A673 (cell line): ENCODE measurements at regions of chr17 and their contacts with region 1.

Region 1: GRCh38 chr17:42833767-42834422 is 698 bp downstream of the PSME3 start:
- DNase-seq: peak; percentile 14
- H3K4me3 ChIP-seq: peak overlapping the region; percentile 79
- H3K27ac ChIP-seq: peak overlapping the region; percentile 95
- H3K4me1 ChIP-seq: peaks cover 9% of the 10 kb centered on the region
- H3K27me3 ChIP-seq: no peaks in the 10 kb centered on the region
- CTCF ChIP-seq: no peak

Region 2: GRCh38 chr17:42307362-42307927 is 526.5 kb before region 1 on chr17:
- CTCF ChIA-PET with region 1: no interaction called
- POLR2A ChIA-PET with region 1: interaction called, 14 read pairs
- intact Hi-C with region 1: no loop called
- DNase-seq: no peak
- H3K4me3 ChIP-seq: no peak overlapping the region
- H3K27ac ChIP-seq: no peak overlapping the region
- H3K4me1 ChIP-seq: peaks cover 7% of the 10 kb centered on the region
- H3K27me3 ChIP-seq: no peaks in the 10 kb centered on the region
- CTCF ChIP-seq: no peak

Region 3: GRCh38 chr17:42456223-42457131 is 377.4 kb before region 1 on chr17:
- CTCF ChIA-PET with region 1: no interaction called
- POLR2A ChIA-PET with region 1: no interaction called
- intact Hi-C with region 1: no loop called
- DNase-seq: peak; percentile 64
- H3K4me3 ChIP-seq: no peak overlapping the region
- H3K27ac ChIP-seq: peak overlapping the region; percentile 70
- H3K4me1 ChIP-seq: peaks cover 17% of the 10 kb centered on the region
- H3K27me3 ChIP-seq: no peaks in the 10 kb centered on the region
- CTCF ChIP-seq: no peak